Activated CD4-positive, alpha-beta T cell treated with anti-CD3 and anti-CD28 coated beads, Interleukin-2, amount 10 ng/mL, durations not matched to agents 24 days and 14 days (primary cell): ENCODE measurements at regions of chr6 and their contacts with region 1.

Region 1: GRCh38 chr6:45479834-45480751 is 102.4 kb upstream of the SUPT3H start:
- DNase-seq: no peak
- H3K4me3 Mint-ChIP-seq: no peak overlapping the region
- H3K27ac Mint-ChIP-seq: no peak overlapping the region
- H3K4me1 Mint-ChIP-seq: peaks cover 22% of the 10 kb centered on the region
- H3K27me3 Mint-ChIP-seq: no peaks in the 10 kb centered on the region

Region 2: GRCh38 chr6:45436544-45437438 is 43.3 kb before region 1 on chr6:
- intact Hi-C with region 1: loop called (anchors 2 kb)
- DNase-seq: peak; percentile 75
- H3K4me3 Mint-ChIP-seq: peak overlapping the region; percentile 79
- H3K27ac Mint-ChIP-seq: peak overlapping the region; percentile 91
- H3K4me1 Mint-ChIP-seq: peaks cover 60% of the 10 kb centered on the region
- H3K27me3 Mint-ChIP-seq: no peaks in the 10 kb centered on the region

Region 3: GRCh38 chr6:45558858-45559257 is 78.8 kb after region 1 on chr6:
- intact Hi-C with region 1: no loop called
- DNase-seq: no peak
- H3K4me3 Mint-ChIP-seq: peak overlapping the region; percentile 46
- H3K27ac Mint-ChIP-seq: peak overlapping the region; percentile 73
- H3K4me1 Mint-ChIP-seq: peaks cover 42% of the 10 kb centered on the region
- H3K27me3 Mint-ChIP-seq: peaks cover 5% of the 10 kb centered on the region

Region 4: DNA sequence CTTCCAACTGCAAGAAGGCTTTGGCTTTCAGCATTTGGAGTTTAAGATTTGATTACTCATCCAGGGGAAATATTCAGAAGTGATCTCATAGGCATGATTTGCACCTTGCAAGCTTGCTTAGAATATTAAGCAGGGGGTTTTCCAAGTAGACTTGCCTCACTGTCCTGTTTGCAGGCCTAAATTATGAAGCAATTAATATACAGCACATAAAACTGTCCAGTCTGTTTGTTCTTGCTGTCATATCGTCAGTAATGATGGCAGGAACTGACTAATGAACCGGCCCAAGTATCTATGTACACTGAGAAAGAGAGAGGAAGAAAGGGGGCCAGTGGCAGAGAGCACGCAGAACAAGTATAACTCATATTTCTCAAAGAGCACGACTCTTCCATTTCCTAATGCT is 110.1 kb after region 1 on chr6:
- intact Hi-C with region 1: loop called (anchors 10 kb)
- DNase-seq: peak; percentile 54
- H3K4me3 Mint-ChIP-seq: no peak overlapping the region
- H3K27ac Mint-ChIP-seq: peak overlapping the region; percentile 57
- H3K4me1 Mint-ChIP-seq: peaks cover 75% of the 10 kb centered on the region
- H3K27me3 Mint-ChIP-seq: no peaks in the 10 kb centered on the region